HepG2 (cell line): ENCODE measurements at regions of chr13 and their contacts with region 1.

Region 1: DNA sequence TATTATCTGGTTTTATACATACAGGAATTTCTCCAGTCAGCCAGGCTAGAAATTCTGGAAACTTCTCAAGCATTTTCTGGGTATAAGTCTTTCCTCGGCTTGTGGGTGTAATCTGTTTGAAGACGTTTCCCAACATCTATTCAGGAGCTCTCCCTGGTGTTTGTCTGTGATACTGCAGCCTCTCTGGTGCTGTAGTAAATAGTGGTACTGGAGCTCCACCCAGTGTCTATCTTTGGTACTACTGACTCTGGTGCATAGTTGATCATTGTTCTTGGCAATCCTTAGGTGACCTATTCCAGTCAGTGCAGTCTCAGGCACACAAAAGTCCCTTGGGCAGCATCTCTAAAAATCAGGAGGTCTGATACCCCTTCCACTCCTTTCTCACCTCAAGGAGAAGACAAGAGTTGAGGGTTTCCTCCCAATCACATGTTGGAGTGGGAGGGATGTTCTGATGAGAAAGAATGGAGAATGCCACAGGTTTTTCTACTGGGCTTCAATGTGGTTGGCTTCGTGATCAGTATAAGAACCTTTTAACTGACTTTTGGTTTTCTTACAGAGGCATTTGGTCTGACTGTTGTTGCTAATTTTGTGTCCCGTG is 115.5 kb downstream of the CYSLTR2 start:
- DNase-seq: peak; percentile 82
- ATAC-seq: peak; percentile 97
- H3K4me3 ChIP-seq: no peak overlapping the region
- H3K27ac ChIP-seq: no peak overlapping the region
- H3K4me1 ChIP-seq: no peaks in the 10 kb centered on the region
- H3K27me3 ChIP-seq: no peaks in the 10 kb centered on the region
- CTCF ChIP-seq: peak; percentile 98
- EP300 ChIP-seq: no peak
- POLR2A ChIP-seq: no peak
- RAD21 ChIP-seq: peak; percentile 96

Region 2: GRCh38 chr13:48126944-48127830 is 642.0 kb before region 1 on chr13:
- CTCF ChIA-PET with region 1: interaction called, 9 read pairs
- POLR2A ChIA-PET with region 1: no interaction called
- in situ Hi-C with region 1: loop called (anchors 25 kb)
- intact Hi-C with region 1: loop called (anchors 5 kb)
- DNase-seq: peak; percentile 63
- ATAC-seq: peak; percentile 73
- H3K4me3 ChIP-seq: peak overlapping the region in 1 of 3 experiments; percentile 27; a peak in 1 of 6 replicates
- H3K27ac ChIP-seq: no peak overlapping the region
- H3K4me1 ChIP-seq: peaks cover 53% of the 10 kb centered on the region
- H3K27me3 ChIP-seq: no peaks in the 10 kb centered on the region
- CTCF ChIP-seq: peak; percentile 74
- EP300 ChIP-seq: no peak
- POLR2A ChIP-seq: no peak
- RAD21 ChIP-seq: no peak

Region 3: DNA sequence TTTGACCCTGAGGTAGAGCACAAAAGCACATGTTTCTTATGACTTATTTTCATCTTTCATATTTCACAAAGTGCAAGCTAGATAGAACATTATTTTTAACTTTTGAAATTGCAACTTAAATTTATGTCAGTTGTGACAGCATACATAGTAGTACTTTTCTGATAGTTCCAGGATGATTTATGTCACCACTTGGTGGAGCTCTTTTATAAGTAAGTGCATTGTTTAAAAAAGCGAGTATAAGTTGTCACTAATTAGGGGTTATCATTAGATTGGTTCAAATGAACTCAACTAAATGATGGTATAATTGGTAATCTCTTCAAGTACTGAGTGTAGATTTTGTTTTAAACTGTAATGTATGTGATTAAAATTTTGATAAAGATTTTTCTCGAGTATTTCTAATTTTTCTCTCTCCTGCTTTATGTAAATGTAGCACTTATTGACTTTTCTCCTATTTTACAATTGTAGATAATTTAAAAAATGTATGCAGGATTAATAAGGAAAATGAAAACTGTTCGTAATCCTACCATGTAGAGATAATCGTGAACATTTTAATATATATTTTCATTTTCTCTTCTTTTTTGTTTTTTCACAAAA is 434.6 kb before region 1 on chr13:
- CTCF ChIA-PET with region 1: interaction called, 13 read pairs
- POLR2A ChIA-PET with region 1: no interaction called
- in situ Hi-C with region 1: no loop called
- intact Hi-C with region 1: loop called (anchors 5 kb)
- DNase-seq: peak; percentile 36
- ATAC-seq: peak; percentile 62
- H3K4me3 ChIP-seq: no peak overlapping the region
- H3K27ac ChIP-seq: no peak overlapping the region
- H3K4me1 ChIP-seq: no peaks in the 10 kb centered on the region
- H3K27me3 ChIP-seq: no peaks in the 10 kb centered on the region
- CTCF ChIP-seq: peak; percentile 65
- EP300 ChIP-seq: no peak
- POLR2A ChIP-seq: no peak
- RAD21 ChIP-seq: peak; percentile 59

Region 4: GRCh38 chr13:48731957-48732569 is 37.1 kb before region 1 on chr13:
- CTCF ChIA-PET with region 1: interaction called, 11 read pairs
- POLR2A ChIA-PET with region 1: no interaction called
- in situ Hi-C with region 1: no loop called
- intact Hi-C with region 1: loop called (anchors 1 kb)
- DNase-seq: peak; percentile 11
- ATAC-seq: peak; percentile 98
- H3K4me3 ChIP-seq: no peak overlapping the region
- H3K27ac ChIP-seq: no peak overlapping the region
- H3K4me1 ChIP-seq: no peaks in the 10 kb centered on the region
- H3K27me3 ChIP-seq: peaks cover 0 to 5% of the 10 kb centered on the region in 2 experiments; a peak in 1 of 5 replicates
- CTCF ChIP-seq: peak; percentile 79
- EP300 ChIP-seq: no peak
- POLR2A ChIP-seq: no peak
- RAD21 ChIP-seq: peak; percentile 48; the same call in 1 of the 2 replicates